Naive thymus-derived CD4-positive, alpha-beta T cell (primary cell): ENCODE measurements at regions of chr5 and their contacts with region 1.

Region 1: GRCh38 chr5:74673011-74673790 is 11.8 kb upstream of the HEXB start:
- DNase-seq: peak in 5 of 9 donors; percentile 8 to 30 (median 21)
- ATAC-seq: no peak
- H3K4me3 ChIP-seq: no peak overlapping the region
- H3K4me3 Mint-ChIP-seq: no peak overlapping the region
- H3K27ac ChIP-seq: no peak overlapping the region
- H3K27ac Mint-ChIP-seq: no peak overlapping the region
- H3K4me1 ChIP-seq: no peaks in the 10 kb centered on the region
- H3K4me1 Mint-ChIP-seq: peaks cover 0 to 2% (median 0%) of the 10 kb centered on the region in 7 donors
- H3K27me3 ChIP-seq: no peaks in the 10 kb centered on the region
- H3K27me3 Mint-ChIP-seq: peaks cover 9 to 31% (median 15%) of the 10 kb centered on the region in 5 donors

Region 2: GRCh38 chr5:74903165-74903787 is 230.1 kb after region 1 on chr5:
- CTCF ChIA-PET with region 1: no interaction called
- POLR2A ChIA-PET with region 1: no interaction called
- intact Hi-C with region 1: loop called in 1 of 2 experiments (anchors 5 kb)
- DNase-seq: peak in 6 of 9 donors; percentile 3 to 21 (median 10)
- ATAC-seq: peak; percentile 75
- H3K4me3 ChIP-seq: no peak overlapping the region
- H3K4me3 Mint-ChIP-seq: no peak overlapping the region
- H3K27ac ChIP-seq: no peak overlapping the region
- H3K27ac Mint-ChIP-seq: no peak overlapping the region
- H3K4me1 ChIP-seq: no peaks in the 10 kb centered on the region
- H3K4me1 Mint-ChIP-seq: peaks cover 0 to 6% (median 0%) of the 10 kb centered on the region in 7 donors
- H3K27me3 ChIP-seq: no peaks in the 10 kb centered on the region
- H3K27me3 Mint-ChIP-seq: no peaks in the 10 kb centered on the region

Region 3: GRCh38 chr5:75265731-75266130 is 592.5 kb after region 1 on chr5:
- CTCF ChIA-PET with region 1: no interaction called
- POLR2A ChIA-PET with region 1: interaction called, 4 read pairs
- intact Hi-C with region 1: loop called in 1 of 2 experiments (anchors 1 kb)
- DNase-seq: peak in 7 of 9 donors; percentile 27 to 65 (median 55)
- ATAC-seq: peak; percentile 75
- H3K4me3 ChIP-seq: no peak overlapping the region
- H3K4me3 Mint-ChIP-seq: no peak overlapping the region
- H3K27ac ChIP-seq: no peak overlapping the region
- H3K27ac Mint-ChIP-seq: peak overlapping the region in 1 of 9 donors; percentile 56
- H3K4me1 ChIP-seq: no peaks in the 10 kb centered on the region
- H3K4me1 Mint-ChIP-seq: peaks cover 0 to 5% (median 0%) of the 10 kb centered on the region in 7 donors
- H3K27me3 ChIP-seq: no peaks in the 10 kb centered on the region
- H3K27me3 Mint-ChIP-seq: peaks cover 0 to 11% (median 4%) of the 10 kb centered on the region in 5 donors